SK-N-SH (cell line): ENCODE measurements at regions of chr15 and their contacts with region 1.

Region 1: DNA sequence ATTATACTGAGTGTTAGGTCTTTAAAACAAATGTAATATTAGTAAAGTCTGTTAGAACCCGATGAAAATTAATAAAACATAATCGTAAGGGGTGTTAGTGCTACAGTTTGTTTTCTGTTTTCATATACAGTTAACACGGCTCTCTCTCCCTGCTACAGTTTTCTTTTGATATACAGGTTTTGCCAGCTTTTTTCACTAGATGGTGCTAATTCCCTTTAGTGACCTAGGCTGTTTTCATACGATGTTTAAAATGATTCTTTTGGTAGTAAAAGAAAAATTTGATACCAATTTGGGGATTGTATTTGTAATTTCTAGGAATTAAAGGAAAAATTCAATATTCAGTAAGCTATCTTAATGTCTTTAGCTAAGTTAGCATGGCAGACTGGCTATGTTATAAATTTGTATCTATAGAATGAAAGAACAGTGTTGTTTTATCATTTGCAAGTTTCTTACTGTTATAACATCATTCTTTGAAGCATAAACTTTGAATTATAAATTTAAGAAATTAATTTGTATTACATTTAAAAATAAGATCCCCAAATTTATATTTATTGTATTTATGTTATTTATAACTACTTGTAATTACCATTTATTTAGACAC is 11.5 kb downstream of the APH1B start:
- DNase-seq: peak; percentile 66
- H3K4me3 ChIP-seq: peak overlapping the region in 1 of 2 experiments; percentile 40; a peak in 1 of 4 replicates
- H3K27ac ChIP-seq: peak overlapping the region in 1 of 2 experiments; percentile 34; a peak in 1 of 4 replicates
- H3K4me1 ChIP-seq: peaks cover 0 to 21% of the 10 kb centered on the region in 2 experiments; a peak in 2 of 4 replicates
- H3K27me3 ChIP-seq: no peaks in the 10 kb centered on the region
- CTCF ChIP-seq: peak; percentile 88
- EP300 ChIP-seq: no peak
- RAD21 ChIP-seq: peak; percentile 95

Region 2: GRCh38 chr15:63306492-63307073 is 17.7 kb after region 1 on chr15:
- CTCF ChIA-PET with region 1: interaction called, 32 read pairs
- POLR2A ChIA-PET with region 1: no interaction called
- DNase-seq: no peak
- H3K4me3 ChIP-seq: no peak overlapping the region
- H3K27ac ChIP-seq: no peak overlapping the region
- H3K4me1 ChIP-seq: peaks cover 0 to 8% of the 10 kb centered on the region in 2 experiments; a peak in 3 of 4 replicates
- H3K27me3 ChIP-seq: no peaks in the 10 kb centered on the region
- CTCF ChIP-seq: no peak
- EP300 ChIP-seq: peak in 1 of 2 experiments; percentile 8; a peak in 1 of 4 replicates
- RAD21 ChIP-seq: no peak

Region 3: DNA sequence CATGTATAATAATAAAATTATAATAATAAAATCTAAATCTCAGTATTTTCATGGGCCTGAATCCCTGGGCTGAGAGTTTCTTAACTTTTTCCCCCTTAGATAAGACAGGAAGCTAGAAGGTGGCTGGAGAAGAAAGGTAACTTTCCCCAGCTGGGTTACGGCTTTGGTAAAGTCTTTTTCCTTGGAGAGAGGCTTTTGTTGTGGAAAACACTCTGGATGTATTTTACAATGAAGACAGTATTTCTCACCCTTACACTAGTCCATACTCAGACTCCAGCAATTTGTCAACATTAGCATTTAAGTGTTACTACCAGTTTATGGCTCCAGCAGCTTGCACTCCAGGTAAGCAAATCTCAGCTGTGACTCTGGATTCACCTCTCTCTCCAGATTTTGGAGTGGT is 23.4 kb after region 1 on chr15:
- CTCF ChIA-PET with region 1: interaction called, 32 read pairs
- POLR2A ChIA-PET with region 1: no interaction called
- DNase-seq: no peak
- H3K4me3 ChIP-seq: no peak overlapping the region
- H3K27ac ChIP-seq: no peak overlapping the region
- H3K4me1 ChIP-seq: peaks cover 0 to 14% of the 10 kb centered on the region in 2 experiments; a peak in 3 of 4 replicates
- H3K27me3 ChIP-seq: no peaks in the 10 kb centered on the region
- CTCF ChIP-seq: no peak
- EP300 ChIP-seq: no peak
- RAD21 ChIP-seq: no peak

Region 4: GRCh38 chr15:63381301-63382204 is 92.7 kb after region 1 on chr15 and contains the start of gene CA12:
- CTCF ChIA-PET with region 1: interaction called, 11 read pairs
- POLR2A ChIA-PET with region 1: no interaction called
- DNase-seq: peak; percentile 65
- H3K4me3 ChIP-seq: peak within 1 kb of the TSS; percentile 56 to 74
- H3K27ac ChIP-seq: peak within 1 kb of the TSS in 1 of 2 experiments; percentile 60; a peak in 1 of 4 replicates
- H3K4me1 ChIP-seq: peaks cover 15 to 26% of the 10 kb centered on the region in 2 experiments
- H3K27me3 ChIP-seq: no peaks in the 10 kb centered on the region
- CTCF ChIP-seq: no peak
- EP300 ChIP-seq: no peak
- RAD21 ChIP-seq: no peak
- polyA plus RNA-seq, gene CA12: 39.4 and 44.3 TPM in 2 replicates

Region 5: GRCh38 chr15:63402498-63403253 is 113.8 kb after region 1 on chr15:
- CTCF ChIA-PET with region 1: interaction called, 73 read pairs
- POLR2A ChIA-PET with region 1: interaction called, 4 read pairs
- DNase-seq: peak; percentile 41
- H3K4me3 ChIP-seq: no peak overlapping the region
- H3K27ac ChIP-seq: no peak overlapping the region
- H3K4me1 ChIP-seq: peaks cover 1 to 6% of the 10 kb centered on the region in 2 experiments; a peak in 3 of 4 replicates
- H3K27me3 ChIP-seq: no peaks in the 10 kb centered on the region
- CTCF ChIP-seq: peak; percentile 82
- EP300 ChIP-seq: no peak
- RAD21 ChIP-seq: peak; percentile 87

Region 6: GRCh38 chr15:63414474-63415120 is 125.7 kb after region 1 on chr15:
- CTCF ChIA-PET with region 1: interaction called, 10 read pairs
- POLR2A ChIA-PET with region 1: no interaction called
- DNase-seq: no peak
- H3K4me3 ChIP-seq: no peak overlapping the region
- H3K27ac ChIP-seq: no peak overlapping the region
- H3K4me1 ChIP-seq: peaks cover 0 to 5% of the 10 kb centered on the region in 2 experiments; a peak in 1 of 4 replicates
- H3K27me3 ChIP-seq: no peaks in the 10 kb centered on the region
- CTCF ChIP-seq: no peak
- EP300 ChIP-seq: no peak
- RAD21 ChIP-seq: no peak